Cardiac septum (tissue), 1 donor: ENCODE measurements at regions of chr22 and their contacts with region 1.

Region 1: GRCh38 chr22:26589845-26590736 is at the start of gene TPST2:
- DNase-seq: peak; percentile 93
- total RNA-seq, gene TPST2: 22.0 TPM

Region 2: DNA sequence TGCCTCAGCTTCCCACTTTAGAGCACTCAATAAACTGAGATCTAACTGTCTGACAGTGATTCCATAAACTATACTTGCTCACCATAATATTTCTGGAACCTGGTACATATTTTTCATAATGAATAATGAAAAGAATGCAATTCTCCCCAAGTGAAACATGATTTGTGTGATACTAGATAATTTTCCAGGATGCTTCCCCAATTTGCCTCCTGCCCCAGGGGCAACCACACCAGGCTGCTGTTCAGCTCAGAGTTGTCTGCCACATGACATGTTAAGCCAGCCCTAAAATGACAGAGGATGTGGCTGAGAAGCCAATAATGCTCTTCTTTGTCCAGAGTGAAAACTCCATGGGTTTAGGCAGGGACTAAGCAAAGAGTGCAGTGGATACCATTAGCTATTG is 483.7 kb before region 1 on chr22:
- intact Hi-C with region 1: no loop called
- DNase-seq: no peak

Region 3: GRCh38 chr22:26503758-26504157 is 86.3 kb before region 1 on chr22:
- intact Hi-C with region 1: loop called (anchors 2 kb)
- DNase-seq: no peak

Region 4: DNA sequence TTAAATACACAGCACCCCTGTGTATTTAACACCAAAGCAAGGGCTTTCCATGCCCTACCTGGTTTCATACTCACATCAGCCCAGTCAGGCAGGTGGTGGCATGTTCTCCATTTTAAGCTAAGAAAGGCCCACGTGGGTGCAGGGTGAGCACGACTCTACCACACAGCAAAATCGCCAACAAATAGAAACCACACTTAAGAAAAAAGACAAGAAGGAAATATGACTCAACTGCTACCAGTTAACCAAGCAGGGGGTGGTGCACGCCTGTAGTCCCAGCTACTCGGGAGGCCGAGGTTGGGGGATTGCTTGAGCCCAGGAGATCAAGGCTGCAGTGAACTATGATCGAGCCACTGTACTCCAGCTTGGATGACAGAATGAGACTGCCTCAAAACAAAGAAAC is 42.7 kb before region 1 on chr22:
- intact Hi-C with region 1: loop called (anchors 5 kb)
- DNase-seq: no peak

Region 5: GRCh38 chr22:26558248-26558895 is 31.7 kb before region 1 on chr22:
- intact Hi-C with region 1: no loop called
- DNase-seq: no peak